ENCODE measurements at regions of chr3 and their contacts with region 1.

Region 1: GRCh38 chr3:136752422-136753325 is 496 bp upstream of the STAG1 start:
- DNase-seq: peak; percentile 91 to 99
- H3K4me3 ChIP-seq: peak overlapping the region; percentile 92 to 93
- H3K27ac ChIP-seq: peak overlapping the region; percentile 97 to 98
- H3K4me1 ChIP-seq: peaks cover 0 to 22% of the 10 kb centered on the region in 2 donors
- H3K27me3 ChIP-seq: no peaks in the 10 kb centered on the region
- CTCF ChIP-seq: peak in 2 of 3 experiments; percentile 39 to 97

Region 2: GRCh38 chr3:136075218-136075808 is 677.4 kb before region 1 on chr3:
- intact Hi-C with region 1: loop called (anchors 2 kb)
- DNase-seq: peak; percentile 10 to 87
- H3K4me3 ChIP-seq: no peak overlapping the region
- H3K27ac ChIP-seq: no peak overlapping the region
- H3K4me1 ChIP-seq: peaks cover 6 to 15% of the 10 kb centered on the region in 2 donors
- H3K27me3 ChIP-seq: no peaks in the 10 kb centered on the region
- CTCF ChIP-seq: peak; percentile 87 to 91 (median 90)

Region 3: DNA sequence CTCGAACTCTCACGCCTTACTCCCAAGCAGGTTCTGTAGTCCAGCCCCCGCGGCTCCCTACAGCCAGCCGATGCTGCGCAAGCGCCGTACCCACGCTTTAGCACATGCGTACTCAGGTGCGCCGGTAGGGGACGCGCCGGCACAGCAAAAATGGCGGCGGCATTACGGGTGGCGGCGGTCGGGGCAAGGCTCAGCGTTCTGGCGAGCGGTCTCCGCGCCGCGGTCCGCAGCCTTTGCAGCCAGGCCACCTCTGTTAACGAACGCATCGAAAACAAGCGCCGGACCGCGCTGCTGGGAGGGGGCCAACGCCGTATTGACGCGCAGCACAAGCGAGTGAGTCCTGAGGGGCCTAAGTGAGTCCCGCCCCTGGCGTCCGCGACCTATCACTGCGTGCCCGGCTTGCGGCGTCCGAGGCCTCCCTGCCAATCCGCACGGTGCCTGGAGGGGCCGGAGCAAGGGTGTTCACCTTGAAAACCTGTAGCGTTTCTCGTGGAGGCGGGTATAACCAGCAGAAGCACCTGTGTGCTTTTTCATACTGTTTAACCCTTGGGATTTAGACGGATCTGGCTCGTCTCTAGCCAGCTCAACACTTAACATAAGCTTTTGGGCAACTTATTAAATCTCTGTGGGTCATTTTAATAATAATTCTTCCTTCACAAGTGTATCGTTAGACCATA is 502.3 kb before region 1 on chr3 and contains the start of gene PCCB:
- intact Hi-C with region 1: loop called (anchors 1 kb)
- DNase-seq: peak; percentile 65 to 96
- H3K4me3 ChIP-seq: peak within 1 kb of the TSS; percentile 60 to 81
- H3K27ac ChIP-seq: peak within 1 kb of the TSS; percentile 80 to 90
- H3K4me1 ChIP-seq: peaks cover 0 to 3% of the 10 kb centered on the region in 2 donors
- H3K27me3 ChIP-seq: no peaks in the 10 kb centered on the region
- CTCF ChIP-seq: peak; percentile 81 to 92 (median 85)
- total RNA-seq, gene PCCB: 114 TPM

Region 4: GRCh38 chr3:136545664-136546268 is 206.9 kb before region 1 on chr3:
- intact Hi-C with region 1: loop called (anchors 5 kb)
- DNase-seq: no peak
- H3K4me3 ChIP-seq: no peak overlapping the region
- H3K27ac ChIP-seq: no peak overlapping the region
- H3K4me1 ChIP-seq: peaks cover 0 to 2% of the 10 kb centered on the region in 2 donors
- H3K27me3 ChIP-seq: no peaks in the 10 kb centered on the region
- CTCF ChIP-seq: peak in 1 of 3 experiments; percentile 43

Region 5: GRCh38 chr3:136818769-136819391 is 66.2 kb after region 1 on chr3 and contains the start of gene SLC35G2:
- intact Hi-C with region 1: loop called (anchors 1 kb)
- DNase-seq: peak; percentile 10 to 76
- H3K4me3 ChIP-seq: peak within 1 kb of the TSS; percentile 72 to 88
- H3K27ac ChIP-seq: peak within 1 kb of the TSS; percentile 63 to 84
- H3K4me1 ChIP-seq: peaks cover 2 to 6% of the 10 kb centered on the region in 2 donors
- H3K27me3 ChIP-seq: no peaks in the 10 kb centered on the region
- CTCF ChIP-seq: peak in 1 of 3 experiments; percentile 13
- total RNA-seq, gene SLC35G2: 10.0 TPM

Region 6: GRCh38 chr3:136994772-136995516 is 242.3 kb after region 1 on chr3:
- intact Hi-C with region 1: loop called (anchors 2 kb)
- DNase-seq: peak; percentile 83 to 95
- H3K4me3 ChIP-seq: peak overlapping the region in 1 of 2 donors; percentile 3
- H3K27ac ChIP-seq: peak overlapping the region; percentile 77 to 85
- H3K4me1 ChIP-seq: peaks cover 0 to 17% of the 10 kb centered on the region in 2 donors
- H3K27me3 ChIP-seq: no peaks in the 10 kb centered on the region
- CTCF ChIP-seq: no peak